Activated T-helper 1 cell treated with anti-CD3 and anti-CD28 coated beads, Interleukin-12 subunit alpha, Interleukin-12 subunit beta, Interleukin-2, Interleukin-4 antibody, amounts not matched to agents 30 ng/mL and 10 ng/mL and 1 ng/mL, durations not matched to agents 14 hours and 24 hours and 36 hours (primary cell): ENCODE measurements at regions of chr17 and their contacts with region 1.

Region 1: DNA sequence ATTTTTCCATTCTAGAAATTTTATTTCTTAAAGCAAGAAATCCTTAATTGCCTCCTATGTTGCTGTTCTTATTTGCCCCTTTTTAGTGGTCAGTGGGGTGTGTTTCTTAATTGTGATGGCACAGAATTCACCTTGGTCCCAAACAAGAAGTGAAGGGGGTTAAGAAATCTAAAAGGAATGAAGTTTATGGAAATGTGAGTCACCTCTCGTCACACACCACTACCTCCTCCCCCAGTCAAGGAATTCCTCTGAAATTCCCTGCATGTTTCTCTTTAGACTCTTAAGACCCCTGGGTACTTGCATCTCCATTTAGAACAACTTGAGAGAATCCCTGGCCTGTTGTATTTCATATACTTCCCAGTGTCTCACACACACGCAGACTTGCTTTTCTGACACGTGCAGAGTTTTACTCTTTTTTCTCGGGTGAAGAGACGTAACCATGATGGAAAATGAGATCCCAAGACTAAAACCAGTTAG is 247.4 kb downstream of the PRKCA start:
- DNase-seq: no peak
- H3K4me3 Mint-ChIP-seq: no peak overlapping the region
- H3K27ac Mint-ChIP-seq: no peak overlapping the region
- H3K4me1 Mint-ChIP-seq: peaks cover 42% of the 10 kb centered on the region
- H3K27me3 Mint-ChIP-seq: no peaks in the 10 kb centered on the region

Region 2: GRCh38 chr17:66313995-66314659 is 235.6 kb before region 1 on chr17:
- intact Hi-C with region 1: loop called (anchors 1 kb)
- DNase-seq: no peak
- H3K4me3 Mint-ChIP-seq: no peak overlapping the region
- H3K27ac Mint-ChIP-seq: peak overlapping the region; percentile 80
- H3K4me1 Mint-ChIP-seq: peaks cover 77% of the 10 kb centered on the region
- H3K27me3 Mint-ChIP-seq: no peaks in the 10 kb centered on the region

Region 3: DNA sequence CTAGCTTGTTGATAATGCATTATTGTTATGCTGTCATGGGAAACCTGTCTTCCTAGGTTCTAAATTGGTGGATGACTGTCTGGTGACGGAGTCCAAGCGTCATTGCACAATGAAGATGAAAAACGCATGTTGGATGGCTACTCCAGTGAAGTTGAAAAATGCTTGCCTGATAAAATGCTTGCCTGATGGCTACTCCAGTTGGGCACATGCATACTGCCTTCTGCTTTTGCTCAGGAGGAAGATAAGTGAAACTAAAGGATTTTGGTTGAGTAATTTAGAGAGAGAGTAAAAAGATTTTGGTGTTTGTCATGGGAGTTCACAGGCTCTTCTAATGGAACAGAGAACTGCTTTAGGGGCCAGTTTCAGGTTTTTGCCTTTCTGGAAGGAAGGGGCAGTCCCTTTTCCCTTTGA is 128.8 kb before region 1 on chr17:
- intact Hi-C with region 1: loop called (anchors 1 kb)
- DNase-seq: no peak
- H3K4me3 Mint-ChIP-seq: no peak overlapping the region
- H3K27ac Mint-ChIP-seq: peak overlapping the region; percentile 62
- H3K4me1 Mint-ChIP-seq: peaks cover 62% of the 10 kb centered on the region
- H3K27me3 Mint-ChIP-seq: no peaks in the 10 kb centered on the region

Region 4: DNA sequence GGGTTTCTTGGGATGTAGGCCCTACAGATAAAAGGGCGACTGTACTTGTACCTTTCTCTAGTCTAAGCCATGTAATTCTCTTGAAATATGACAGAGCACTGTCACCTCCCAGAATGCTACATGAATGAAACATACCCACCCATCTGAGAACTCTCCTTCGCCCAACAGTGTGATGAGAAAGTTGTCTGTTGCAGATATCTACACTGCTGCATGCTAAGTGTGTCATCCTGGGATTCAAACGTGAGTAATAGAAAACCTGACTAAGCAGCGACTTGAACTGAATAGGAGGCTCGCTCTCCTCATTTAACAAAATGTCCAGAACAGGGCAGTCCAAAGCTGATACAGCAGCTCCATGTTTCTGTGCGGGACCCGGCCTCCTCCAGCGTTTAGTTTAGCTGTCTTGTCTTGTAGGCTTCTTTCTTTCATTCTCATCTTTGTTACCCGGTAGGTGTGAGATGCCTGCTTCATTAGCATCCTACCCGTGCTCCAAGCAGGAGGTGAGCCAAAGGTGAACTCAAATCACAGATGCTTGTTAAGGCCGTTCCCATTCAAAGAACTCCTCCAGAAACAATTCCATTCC is 35.5 kb before region 1 on chr17:
- intact Hi-C with region 1: loop called (anchors 1 kb)
- DNase-seq: no peak
- H3K4me3 Mint-ChIP-seq: no peak overlapping the region
- H3K27ac Mint-ChIP-seq: peak overlapping the region; percentile 79
- H3K4me1 Mint-ChIP-seq: peaks cover 86% of the 10 kb centered on the region
- H3K27me3 Mint-ChIP-seq: no peaks in the 10 kb centered on the region

Region 5: GRCh38 chr17:66667491-66668030 is 117.8 kb after region 1 on chr17:
- intact Hi-C with region 1: loop called (anchors 5 kb)
- DNase-seq: peak; percentile 61
- H3K4me3 Mint-ChIP-seq: peak overlapping the region; percentile 67
- H3K27ac Mint-ChIP-seq: peak overlapping the region; percentile 88
- H3K4me1 Mint-ChIP-seq: peaks cover 76% of the 10 kb centered on the region
- H3K27me3 Mint-ChIP-seq: peaks cover 3% of the 10 kb centered on the region